Cardiac septum (tissue), 1 donor: ENCODE measurements at regions of chr22 and their contacts with region 1.

Region 1: GRCh38 chr22:40950962-40951794 is at the start of gene RBX1:
- DNase-seq: peak; percentile 99
- total RNA-seq, gene RBX1: 59.3 TPM

Region 2: GRCh38 chr22:41022470-41023298 is 71.5 kb after region 1 on chr22:
- intact Hi-C with region 1: loop called (anchors 2 kb)
- DNase-seq: peak; percentile 96